Astrocyte of the cerebellum (primary cell): ENCODE measurements at regions of chr6 and their contacts with region 1.

Region 1: GRCh38 chr6:143822584-143823024 is 20.5 kb upstream of the LTV1 start:
- DNase-seq: peak; percentile 66
- H3K4me3 ChIP-seq: no peak overlapping the region
- CTCF ChIP-seq: no peak

Region 2: DNA sequence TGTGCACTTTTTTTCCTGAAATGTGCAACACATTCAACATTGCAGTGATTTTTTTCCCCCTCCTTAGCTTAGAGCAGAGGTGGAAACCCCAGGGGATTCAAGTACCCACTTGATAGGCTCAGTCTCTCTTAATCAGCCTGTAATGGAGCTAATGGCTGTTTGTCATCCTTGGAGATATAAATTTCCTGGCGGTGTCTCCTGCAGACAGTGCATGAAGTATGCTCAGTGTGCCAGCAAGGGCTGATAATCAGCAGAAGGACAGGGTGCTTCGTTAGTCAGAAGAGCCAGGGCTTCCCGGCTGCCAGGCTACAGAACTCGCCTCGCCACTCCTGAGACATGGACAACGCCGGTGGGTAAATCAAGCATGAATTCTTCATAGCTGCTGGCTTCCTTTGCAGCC is 214.6 kb before region 1 on chr6:
- in situ Hi-C with region 1: no loop called
- DNase-seq: no peak
- H3K4me3 ChIP-seq: no peak overlapping the region
- CTCF ChIP-seq: no peak

Region 3: GRCh38 chr6:143772116-143773086 is 50.2 kb before region 1 on chr6:
- in situ Hi-C with region 1: no loop called
- DNase-seq: no peak
- H3K4me3 ChIP-seq: no peak overlapping the region
- CTCF ChIP-seq: no peak

Region 4: DNA sequence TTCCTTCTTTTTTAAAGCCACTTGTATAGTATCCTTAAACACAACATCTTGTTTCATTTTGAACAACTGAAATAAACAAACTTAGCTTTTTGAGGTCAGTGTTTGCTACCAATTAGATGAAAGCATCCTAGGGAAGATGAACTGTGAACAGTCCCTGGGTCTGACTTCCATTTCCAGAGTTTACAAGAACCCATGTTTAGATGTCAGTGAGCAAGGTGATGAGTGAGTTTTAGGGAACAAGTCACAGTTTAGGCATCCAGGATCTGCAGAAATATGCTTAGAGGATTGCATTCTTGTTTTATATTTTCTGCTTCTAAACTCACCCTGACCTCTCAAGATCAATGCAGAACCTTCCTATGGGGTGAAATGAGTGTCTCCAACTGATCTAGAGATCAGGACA is 44.6 kb after region 1 on chr6:
- in situ Hi-C with region 1: loop called (anchors 5 kb)
- DNase-seq: no peak
- H3K4me3 ChIP-seq: no peak overlapping the region
- CTCF ChIP-seq: no peak

Region 5: DNA sequence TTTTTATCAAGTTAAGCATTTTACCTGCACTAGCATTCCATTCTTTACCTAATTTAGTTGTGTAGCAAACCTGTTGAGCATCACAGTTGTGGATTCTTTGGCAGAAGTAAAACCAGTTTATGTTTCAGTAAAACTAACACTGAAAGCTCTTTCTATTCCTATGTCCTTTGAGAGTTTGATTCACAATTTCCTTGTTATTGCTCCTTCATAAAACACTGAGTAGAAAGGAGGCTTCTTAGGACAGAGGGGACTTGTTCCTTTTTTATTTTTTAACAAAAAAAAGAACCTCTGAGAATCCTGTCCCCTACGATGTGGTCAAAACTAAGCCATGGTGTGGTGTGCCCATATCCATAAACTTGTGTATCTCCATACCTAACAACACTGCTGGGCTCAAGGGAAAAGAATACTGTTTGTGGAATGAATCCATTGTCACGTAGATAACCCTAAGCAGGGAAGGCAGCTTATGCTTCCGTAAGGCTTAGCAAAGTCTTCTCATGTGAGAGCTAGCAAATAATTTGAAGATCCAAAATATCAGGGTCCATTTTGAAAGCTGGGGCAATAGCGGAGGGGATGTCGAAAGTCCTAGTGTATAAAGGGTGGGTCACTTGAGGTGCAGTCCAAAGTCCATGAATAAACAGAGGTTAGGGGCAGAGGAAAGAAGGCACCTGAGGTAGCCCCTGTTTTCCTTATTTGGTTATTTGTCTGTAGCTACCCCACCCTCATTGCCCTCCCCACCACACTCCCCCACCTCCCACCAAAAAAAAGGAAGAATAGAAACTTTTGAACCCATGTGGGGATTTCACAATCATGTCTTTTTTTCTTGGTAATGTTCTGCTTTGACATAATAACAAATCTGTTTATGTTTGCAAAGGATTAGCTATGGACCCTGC is 114.4 kb after region 1 on chr6:
- in situ Hi-C with region 1: no loop called
- DNase-seq: no peak
- H3K4me3 ChIP-seq: no peak overlapping the region
- CTCF ChIP-seq: no peak